Posterior vena cava (tissue), 2 donors: ENCODE measurements at regions of chr17 and their contacts with region 1.

Region 1: DNA sequence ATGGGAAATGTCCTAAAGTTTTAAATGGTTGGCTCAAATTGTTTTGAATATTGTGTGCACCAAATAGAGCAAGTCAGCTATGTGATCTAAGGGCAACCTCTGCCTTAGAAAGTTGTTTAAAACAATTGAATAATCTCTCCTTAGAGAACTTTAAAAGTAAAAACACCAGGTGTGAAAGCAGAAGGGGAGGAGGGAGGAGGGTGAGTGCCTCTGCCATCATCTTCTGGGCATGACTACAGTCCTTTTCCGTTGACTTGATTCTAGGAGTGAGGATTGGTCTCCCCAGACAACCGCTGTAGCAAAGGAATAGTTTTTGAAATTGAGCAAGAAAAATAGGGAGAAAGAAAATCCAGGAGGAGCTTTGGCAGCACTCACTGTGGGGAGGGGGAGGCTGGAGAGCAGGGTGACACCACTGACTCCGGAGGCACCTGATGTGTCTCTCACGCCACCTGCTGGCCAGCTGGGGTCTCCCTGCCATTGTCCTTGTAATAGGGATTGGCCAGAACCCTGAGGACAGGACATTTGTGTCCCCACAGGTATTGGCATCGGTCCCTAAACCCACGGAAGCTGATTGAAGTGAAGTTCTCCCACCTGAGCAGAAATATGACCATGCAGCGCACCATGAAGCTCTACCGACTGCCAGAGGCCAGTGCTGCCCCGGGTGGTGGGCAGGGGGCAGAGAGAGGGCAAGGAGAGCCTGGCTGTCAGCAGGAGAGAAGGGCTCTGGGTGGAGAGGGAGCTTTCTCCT is 33.3 kb downstream of the PLCD3 start:
- DNase-seq: peak; percentile 96

Region 2: DNA sequence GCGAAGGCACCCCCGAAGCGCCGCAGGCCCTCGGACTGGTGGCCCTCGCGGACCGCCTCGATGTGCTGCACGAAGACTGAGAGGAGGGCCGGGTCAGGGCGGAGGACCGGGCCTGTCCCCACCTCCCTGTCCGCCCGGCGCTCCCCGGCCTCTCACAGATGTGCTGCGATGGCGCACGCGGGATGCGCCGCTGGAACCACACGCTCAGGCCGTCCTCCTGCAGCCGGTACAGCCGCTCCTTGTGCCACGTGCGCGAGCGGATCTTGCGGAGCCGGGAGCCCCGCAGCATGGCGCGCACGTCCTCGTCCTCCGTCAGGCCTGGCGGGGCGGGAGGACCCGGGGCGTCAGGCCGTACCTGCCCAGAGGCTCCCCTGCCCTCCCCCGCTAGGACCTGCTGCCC is 22.0 kb after region 1 on chr17:
- intact Hi-C with region 1: loop called in 1 of 2 experiments (anchors 1 kb)
- DNase-seq: no peak